ENCODE measurements at regions of chr17 and their contacts with region 1.

Region 1: GRCh38 chr17:79490530-79490929 is 120.3 kb downstream of the RBFOX3 start:
- DNase-seq: no peak
- H3K4me3 ChIP-seq: no peak overlapping the region
- H3K27ac ChIP-seq: no peak overlapping the region
- H3K4me1 ChIP-seq: no peaks in the 10 kb centered on the region
- H3K27me3 ChIP-seq: no peaks in the 10 kb centered on the region
- CTCF ChIP-seq: no peak

Region 2: GRCh38 chr17:79325709-79326430 is 164.7 kb before region 1 on chr17:
- CTCF ChIA-PET with region 1: no interaction called
- dilution Hi-C with region 1: no loop called
- in situ Hi-C with region 1: no loop called
- intact Hi-C with region 1: no loop called
- DNase-seq: no peak
- H3K4me3 ChIP-seq: no peak overlapping the region
- H3K27ac ChIP-seq: no peak overlapping the region
- H3K4me1 ChIP-seq: no peaks in the 10 kb centered on the region
- H3K27me3 ChIP-seq: peaks cover 2% of the 10 kb centered on the region
- CTCF ChIP-seq: no peak

Region 3: DNA sequence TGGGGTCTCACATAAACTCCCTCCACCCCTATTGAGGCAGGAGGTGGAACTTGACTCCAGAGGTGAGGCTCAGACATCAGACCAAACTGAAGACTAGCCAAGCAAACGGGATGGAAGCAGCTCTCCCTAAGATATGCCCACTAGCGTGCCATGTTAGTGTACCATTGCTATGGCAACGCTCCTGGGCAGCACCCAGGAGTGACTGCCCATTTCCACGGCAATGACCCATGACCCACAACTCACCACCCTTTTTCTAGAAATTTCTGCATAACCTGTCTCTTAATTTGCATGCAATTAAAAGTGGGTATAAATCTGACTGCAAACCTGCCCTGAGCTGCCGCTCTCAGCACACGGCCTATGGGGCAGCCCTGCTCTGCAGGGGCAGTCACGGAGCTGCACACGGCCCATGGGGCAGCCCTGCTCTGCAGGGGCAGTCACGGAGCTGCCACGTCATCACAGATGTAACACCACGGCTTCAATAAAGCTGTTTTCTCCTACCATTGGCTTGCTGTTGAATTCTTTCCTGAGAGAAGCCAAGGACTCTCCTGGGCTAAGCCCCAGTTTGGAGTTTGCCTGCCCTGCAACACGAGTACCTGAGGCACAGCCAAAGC is 44.0 kb before region 1 on chr17:
- CTCF ChIA-PET with region 1: no interaction called
- dilution Hi-C with region 1: loop called (anchors 5 kb)
- in situ Hi-C with region 1: no loop called
- intact Hi-C with region 1: no loop called
- DNase-seq: no peak
- H3K4me3 ChIP-seq: no peak overlapping the region
- H3K27ac ChIP-seq: no peak overlapping the region
- H3K4me1 ChIP-seq: no peaks in the 10 kb centered on the region
- H3K27me3 ChIP-seq: no peaks in the 10 kb centered on the region
- CTCF ChIP-seq: no peak

Region 4: GRCh38 chr17:79589669-79590522 is 99.4 kb after region 1 on chr17:
- CTCF ChIA-PET with region 1: no interaction called
- dilution Hi-C with region 1: loop called (anchors 5 kb)
- in situ Hi-C with region 1: no loop called
- intact Hi-C with region 1: no loop called
- DNase-seq: no peak
- H3K4me3 ChIP-seq: no peak overlapping the region
- H3K27ac ChIP-seq: no peak overlapping the region
- H3K4me1 ChIP-seq: no peaks in the 10 kb centered on the region
- H3K27me3 ChIP-seq: no peaks in the 10 kb centered on the region
- CTCF ChIP-seq: no peak

Measured in mammary epithelial cell (primary cell).